Heart left ventricle (tissue), 16 donors: ENCODE measurements at regions of chr18 and their contacts with region 1.

Region 1: GRCh38 chr18:73487966-73488365 is 620.2 kb upstream of the NETO1 start:
- DNase-seq: no peak
- ATAC-seq: no peak
- H3K4me3 ChIP-seq: no peak overlapping the region
- H3K27ac ChIP-seq: no peak overlapping the region
- H3K4me1 ChIP-seq: no peaks in the 10 kb centered on the region
- H3K27me3 ChIP-seq: no peaks in the 10 kb centered on the region
- CTCF ChIP-seq: no peak
- POLR2A ChIP-seq: no peak

Region 2: GRCh38 chr18:73421010-73421409 is 67.0 kb before region 1 on chr18:
- intact Hi-C with region 1: loop called in 1 of 10 experiments (anchors 10 kb)
- DNase-seq: no peak
- ATAC-seq: no peak
- H3K4me3 ChIP-seq: no peak overlapping the region
- H3K27ac ChIP-seq: no peak overlapping the region
- H3K4me1 ChIP-seq: no peaks in the 10 kb centered on the region
- H3K27me3 ChIP-seq: no peaks in the 10 kb centered on the region
- CTCF ChIP-seq: no peak
- POLR2A ChIP-seq: no peak

Region 3: GRCh38 chr18:73545315-73545896 is 57.4 kb after region 1 on chr18:
- intact Hi-C with region 1: no loop called
- DNase-seq: no peak
- ATAC-seq: no peak
- H3K4me3 ChIP-seq: no peak overlapping the region
- H3K27ac ChIP-seq: no peak overlapping the region
- H3K4me1 ChIP-seq: no peaks in the 10 kb centered on the region
- H3K27me3 ChIP-seq: no peaks in the 10 kb centered on the region
- CTCF ChIP-seq: no peak
- POLR2A ChIP-seq: no peak

Region 4: GRCh38 chr18:73688847-73689711 is 201.1 kb after region 1 on chr18:
- intact Hi-C with region 1: no loop called
- DNase-seq: no peak
- ATAC-seq: peak in 2 of 4 donors; percentile 56
- H3K4me3 ChIP-seq: no peak overlapping the region
- H3K27ac ChIP-seq: no peak overlapping the region
- H3K4me1 ChIP-seq: peaks cover 0 to 6% (median 0%) of the 10 kb centered on the region in 12 donors
- H3K27me3 ChIP-seq: peaks cover 0 to 8% (median 0%) of the 10 kb centered on the region in 9 donors
- CTCF ChIP-seq: no peak
- POLR2A ChIP-seq: no peak

Region 5: GRCh38 chr18:73879766-73880165 is 391.8 kb after region 1 on chr18:
- intact Hi-C with region 1: no loop called
- DNase-seq: no peak
- ATAC-seq: no peak
- H3K4me3 ChIP-seq: no peak overlapping the region
- H3K27ac ChIP-seq: no peak overlapping the region
- H3K4me1 ChIP-seq: no peaks in the 10 kb centered on the region
- H3K27me3 ChIP-seq: no peaks in the 10 kb centered on the region
- CTCF ChIP-seq: no peak
- POLR2A ChIP-seq: no peak